ENCODE measurements at regions of chr12 and their contacts with region 1.

Region 1: GRCh38 chr12:5083955-5084849 is 40.5 kb downstream of the KCNA5 start:
- DNase-seq: peak; percentile 59
- H3K4me3 ChIP-seq: no peak overlapping the region
- H3K27ac ChIP-seq: no peak overlapping the region
- H3K4me1 ChIP-seq: no peaks in the 10 kb centered on the region
- H3K27me3 ChIP-seq: peaks cover 0 to 6% of the 10 kb centered on the region in 2 experiments
- CTCF ChIP-seq: peak; percentile 56 to 58
- POLR2A ChIP-seq: no peak

Region 2: GRCh38 chr12:4402996-4403395 is 681.2 kb before region 1 on chr12:
- CTCF ChIA-PET with region 1: no interaction called
- POLR2A ChIA-PET with region 1: no interaction called
- dilution Hi-C with region 1: no loop called
- intact Hi-C with region 1: no loop called
- DNase-seq: no peak
- H3K4me3 ChIP-seq: no peak overlapping the region
- H3K27ac ChIP-seq: no peak overlapping the region
- H3K4me1 ChIP-seq: no peaks in the 10 kb centered on the region
- H3K27me3 ChIP-seq: no peaks in the 10 kb centered on the region
- CTCF ChIP-seq: no peak
- POLR2A ChIP-seq: no peak

Region 3: DNA sequence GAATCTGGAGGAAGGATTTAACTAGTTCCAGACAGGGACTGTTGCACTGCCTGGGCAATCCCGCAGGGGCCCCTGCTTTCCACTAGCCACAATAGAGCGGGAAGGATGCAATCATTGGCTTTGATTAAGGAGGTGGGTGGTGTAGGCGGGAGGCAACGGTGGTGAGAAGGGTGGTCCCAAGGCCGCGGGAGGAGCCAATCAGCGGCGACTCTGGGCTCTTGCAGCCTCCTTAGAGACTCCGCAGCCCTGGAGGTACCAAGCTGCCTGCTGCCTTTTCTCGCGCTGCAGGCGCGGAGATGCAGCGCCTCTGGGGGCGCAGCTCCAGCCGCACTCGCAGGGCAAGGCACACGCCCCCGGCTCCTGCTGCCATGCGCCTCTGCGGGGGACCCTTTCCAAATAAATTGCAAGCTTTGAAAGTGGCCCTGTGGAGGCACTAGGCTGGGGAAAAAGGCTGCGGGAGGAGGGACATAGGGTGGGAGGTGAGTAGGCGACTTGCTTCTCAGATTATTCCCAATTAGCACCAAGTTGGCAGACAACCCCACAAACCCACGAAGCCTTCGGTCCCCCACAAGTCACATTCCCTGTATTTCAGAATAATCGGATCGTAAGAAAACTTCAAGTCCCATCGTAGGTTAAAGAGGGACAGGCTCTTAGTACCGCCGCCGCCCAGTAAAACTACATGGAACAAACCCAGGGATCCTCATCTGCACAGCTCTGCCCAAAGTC is 175.4 kb before region 1 on chr12:
- CTCF ChIA-PET with region 1: no interaction called
- POLR2A ChIA-PET with region 1: no interaction called
- dilution Hi-C with region 1: no loop called
- intact Hi-C with region 1: no loop called
- DNase-seq: no peak
- H3K4me3 ChIP-seq: no peak overlapping the region
- H3K27ac ChIP-seq: no peak overlapping the region
- H3K4me1 ChIP-seq: peaks cover 2% of the 10 kb centered on the region
- H3K27me3 ChIP-seq: peaks cover 42 to 50% of the 10 kb centered on the region in 2 experiments
- CTCF ChIP-seq: no peak
- POLR2A ChIP-seq: no peak

Region 4: DNA sequence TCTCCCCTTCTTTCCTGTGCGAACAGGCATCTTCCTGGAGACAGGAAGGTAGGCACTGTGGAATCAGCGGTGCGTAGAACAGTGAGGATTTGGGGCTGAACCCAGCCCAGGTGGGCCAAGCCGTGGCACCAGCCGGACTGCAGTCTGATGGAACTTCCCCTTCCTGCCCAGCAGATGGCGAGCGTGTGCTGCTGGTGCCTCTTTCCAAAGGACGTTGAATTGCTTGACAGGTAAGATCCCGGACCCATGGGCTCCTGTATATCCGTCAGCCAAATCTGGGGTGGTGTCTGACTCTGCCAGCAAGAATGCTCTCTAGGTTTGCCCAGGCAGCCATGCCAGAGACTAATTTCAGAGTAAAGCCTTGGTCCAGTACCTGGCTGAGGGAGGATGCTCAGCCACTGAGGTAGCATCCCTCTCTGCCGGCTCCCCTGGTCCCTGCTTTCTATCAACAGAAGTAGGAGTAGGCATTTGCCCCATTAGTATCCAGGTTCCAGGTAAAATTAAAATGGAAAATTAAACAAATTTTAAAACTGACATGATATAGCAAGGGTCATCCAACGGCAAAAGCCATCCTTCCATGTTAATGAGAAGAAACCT is 61.6 kb before region 1 on chr12:
- CTCF ChIA-PET with region 1: interaction called, 32 read pairs
- POLR2A ChIA-PET with region 1: no interaction called
- dilution Hi-C with region 1: no loop called
- intact Hi-C with region 1: loop called (anchors 1 kb)
- DNase-seq: peak; percentile 36
- H3K4me3 ChIP-seq: no peak overlapping the region
- H3K27ac ChIP-seq: no peak overlapping the region
- H3K4me1 ChIP-seq: no peaks in the 10 kb centered on the region
- H3K27me3 ChIP-seq: no peaks in the 10 kb centered on the region
- CTCF ChIP-seq: peak; percentile 57 to 90
- POLR2A ChIP-seq: no peak

Region 5: GRCh38 chr12:5043589-5044419 is 40.4 kb before region 1 on chr12 and contains the start of gene KCNA5:
- CTCF ChIA-PET with region 1: no interaction called
- POLR2A ChIA-PET with region 1: no interaction called
- dilution Hi-C with region 1: no loop called
- intact Hi-C with region 1: no loop called
- DNase-seq: no peak
- H3K4me3 ChIP-seq: no peak within 1 kb of the TSS
- H3K27ac ChIP-seq: no peak within 1 kb of the TSS
- H3K4me1 ChIP-seq: no peaks in the 10 kb centered on the region
- H3K27me3 ChIP-seq: peaks cover 11 to 13% of the 10 kb centered on the region in 2 experiments
- CTCF ChIP-seq: no peak
- POLR2A ChIP-seq: no peak
- total RNA-seq, gene KCNA5: not detected in 2 replicates

Region 6: GRCh38 chr12:5073853-5074252 is 10.3 kb before region 1 on chr12:
- CTCF ChIA-PET with region 1: interaction called, 22 read pairs
- POLR2A ChIA-PET with region 1: no interaction called
- dilution Hi-C with region 1: no loop called
- intact Hi-C with region 1: no loop called
- DNase-seq: no peak
- H3K4me3 ChIP-seq: no peak overlapping the region
- H3K27ac ChIP-seq: no peak overlapping the region
- H3K4me1 ChIP-seq: no peaks in the 10 kb centered on the region
- H3K27me3 ChIP-seq: no peaks in the 10 kb centered on the region
- CTCF ChIP-seq: no peak
- POLR2A ChIP-seq: no peak

Region 7: GRCh38 chr12:5171701-5172100 is 87.5 kb after region 1 on chr12:
- CTCF ChIA-PET with region 1: no interaction called
- POLR2A ChIA-PET with region 1: no interaction called
- dilution Hi-C with region 1: no loop called
- intact Hi-C with region 1: no loop called
- DNase-seq: peak; percentile 20
- H3K4me3 ChIP-seq: no peak overlapping the region
- H3K27ac ChIP-seq: no peak overlapping the region
- H3K4me1 ChIP-seq: no peaks in the 10 kb centered on the region
- H3K27me3 ChIP-seq: no peaks in the 10 kb centered on the region
- CTCF ChIP-seq: peak; percentile 51 to 53
- POLR2A ChIP-seq: no peak

Measured in endothelial cell of umbilical vein (primary cell).